ENCODE measurements at regions of chr12 and their contacts with region 1.

Region 1: DNA sequence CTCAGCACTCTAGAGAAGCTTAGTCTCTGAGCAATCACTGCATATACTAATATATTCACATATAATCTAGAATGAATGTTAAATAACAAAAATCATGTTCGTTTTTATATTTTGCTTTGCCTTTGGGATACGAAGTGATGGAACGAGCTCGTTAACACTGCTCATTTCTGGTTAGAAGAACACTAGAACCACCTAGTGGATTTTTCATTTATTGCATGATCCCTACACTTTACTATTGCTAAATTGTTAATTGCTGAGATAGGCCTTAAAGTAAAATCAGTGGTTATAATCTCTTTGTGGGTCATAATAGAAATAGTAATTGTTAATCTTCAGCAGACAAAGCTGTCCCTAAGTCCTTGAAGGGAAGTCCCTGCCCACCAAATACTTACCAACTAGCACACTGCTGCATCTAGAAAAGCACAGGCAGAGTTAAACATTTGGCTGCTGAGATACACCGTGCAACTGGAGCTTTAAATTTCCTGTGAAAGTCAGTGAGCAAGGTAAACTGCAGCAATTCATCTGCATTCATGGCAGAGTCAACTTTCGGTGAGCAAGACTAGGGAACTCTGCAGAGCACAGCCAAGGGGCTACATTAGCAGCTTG is 353.7 kb downstream of the APAF1 start:
- DNase-seq: peak; percentile 25
- ATAC-seq: peak; percentile 92
- H3K4me3 ChIP-seq: no peak overlapping the region
- H3K27ac ChIP-seq: no peak overlapping the region
- H3K4me1 ChIP-seq: no peaks in the 10 kb centered on the region; the same call in 1 of the 2 replicates
- H3K27me3 ChIP-seq: no peaks in the 10 kb centered on the region
- CTCF ChIP-seq: peak; percentile 76

Region 2: DNA sequence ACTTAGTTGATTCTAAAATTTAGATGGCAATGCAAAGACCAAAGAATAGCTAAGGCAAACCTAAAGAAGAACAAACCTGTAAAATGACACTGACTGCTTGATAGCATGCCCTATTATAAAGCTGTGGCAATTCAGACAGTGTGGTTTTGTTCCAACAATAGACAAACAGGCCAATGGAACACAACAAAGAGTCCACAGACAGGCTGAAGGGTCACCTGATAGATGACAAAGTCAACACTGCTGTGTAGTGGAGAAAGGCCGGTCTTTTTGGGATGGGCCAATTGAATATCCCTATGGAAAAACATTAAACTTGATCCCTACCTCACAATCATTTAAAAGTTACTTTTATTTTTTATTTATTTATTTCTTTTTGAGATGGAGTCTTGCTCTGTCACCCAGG is 439.1 kb before region 1 on chr12:
- CTCF ChIA-PET with region 1: no interaction called
- POLR2A ChIA-PET with region 1: no interaction called
- in situ Hi-C with region 1: no loop called
- intact Hi-C with region 1: loop called (anchors 10 kb)
- DNase-seq: no peak
- ATAC-seq: no peak
- H3K4me3 ChIP-seq: no peak overlapping the region
- H3K27ac ChIP-seq: no peak overlapping the region
- H3K4me1 ChIP-seq: no peaks in the 10 kb centered on the region
- H3K27me3 ChIP-seq: no peaks in the 10 kb centered on the region
- CTCF ChIP-seq: no peak

Region 3: DNA sequence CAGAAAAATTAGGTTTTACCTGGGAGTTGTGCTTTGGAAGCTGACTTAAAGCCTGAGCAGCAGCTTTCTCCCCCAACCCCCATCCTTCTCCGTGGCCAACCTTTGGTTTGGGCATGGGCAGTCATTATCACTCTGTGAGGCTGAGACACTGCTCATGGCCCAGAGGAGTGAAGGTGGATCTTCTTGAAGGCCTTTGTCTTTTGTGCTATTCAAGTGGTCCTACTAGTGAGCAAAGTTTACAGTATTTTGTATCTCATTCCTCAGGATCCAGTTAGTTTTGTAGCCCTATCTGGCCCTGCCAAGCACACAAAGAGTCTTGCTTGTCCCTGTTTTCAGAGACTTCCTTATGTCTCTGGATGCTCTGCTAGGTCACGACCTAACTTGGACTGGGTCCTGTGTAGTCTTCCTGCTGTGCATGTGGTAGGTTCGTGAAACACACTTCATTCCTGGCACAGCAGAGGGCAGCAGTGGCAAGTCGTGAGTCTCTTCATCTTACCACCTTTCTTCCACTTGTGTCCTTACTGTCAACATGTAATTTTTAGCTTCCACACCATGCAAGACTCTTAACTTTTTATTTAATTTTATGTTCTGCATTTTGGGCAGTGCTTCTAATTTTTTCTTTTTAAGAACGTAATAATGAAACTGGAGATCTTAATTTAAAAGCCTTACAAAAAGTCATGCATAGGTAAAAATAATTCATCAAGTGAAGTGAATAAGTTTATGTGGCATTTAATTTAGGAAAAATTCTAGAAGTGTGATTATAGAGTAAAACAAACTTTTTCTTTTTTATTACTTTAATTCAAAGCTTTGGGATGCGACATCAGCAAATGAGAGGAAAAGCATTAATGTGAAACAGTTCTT is 300.0 kb before region 1 on chr12:
- CTCF ChIA-PET with region 1: no interaction called
- POLR2A ChIA-PET with region 1: no interaction called
- in situ Hi-C with region 1: no loop called
- intact Hi-C with region 1: loop called (anchors 1 kb)
- DNase-seq: peak; percentile 38
- ATAC-seq: peak; percentile 97
- H3K4me3 ChIP-seq: no peak overlapping the region
- H3K27ac ChIP-seq: no peak overlapping the region
- H3K4me1 ChIP-seq: 0 out of 2 replicates have a peak, but pooled peaks cover 3% of the 10 kb centered on the region
- H3K27me3 ChIP-seq: no peaks in the 10 kb centered on the region
- CTCF ChIP-seq: peak; percentile 85

Region 4: DNA sequence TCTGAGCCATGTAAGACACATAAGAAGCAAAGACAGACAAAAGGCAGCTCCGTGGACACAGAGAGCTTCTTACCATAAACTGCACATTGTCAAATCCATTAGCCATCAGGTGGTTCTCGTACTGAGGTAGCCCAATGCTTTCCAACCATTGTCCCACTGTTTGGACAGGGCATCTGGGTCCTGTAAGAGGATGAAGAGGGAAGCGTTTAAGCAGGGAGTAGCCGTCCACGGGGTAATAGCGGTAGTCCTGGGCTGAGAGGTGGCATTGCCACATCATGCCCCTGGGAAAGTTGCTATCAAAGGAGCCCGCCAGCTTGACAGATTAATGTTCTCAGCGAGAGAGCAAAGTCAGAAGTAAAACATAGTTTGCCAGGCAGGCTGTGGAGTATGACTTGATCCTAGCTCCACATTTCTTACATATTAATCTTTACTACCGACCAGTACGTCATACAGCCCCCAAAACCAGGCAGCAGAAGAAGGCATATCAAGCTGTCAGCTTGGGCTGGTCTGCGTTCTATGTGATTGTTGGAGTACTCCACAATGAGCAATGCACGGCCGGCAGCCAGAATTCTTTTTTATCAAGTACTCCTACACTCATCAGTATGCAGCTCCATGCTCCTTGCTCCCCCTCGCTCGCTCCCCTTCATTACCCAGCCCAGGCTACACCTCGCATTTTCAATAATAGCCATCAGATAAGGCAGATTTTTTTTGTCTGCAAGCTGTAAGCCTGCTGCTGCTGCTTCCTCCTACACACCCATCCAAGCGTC is 155.6 kb after region 1 on chr12:
- CTCF ChIA-PET with region 1: no interaction called
- POLR2A ChIA-PET with region 1: no interaction called
- in situ Hi-C with region 1: no loop called
- intact Hi-C with region 1: no loop called
- DNase-seq: no peak
- ATAC-seq: no peak
- H3K4me3 ChIP-seq: no peak overlapping the region
- H3K27ac ChIP-seq: no peak overlapping the region
- H3K4me1 ChIP-seq: no peaks in the 10 kb centered on the region
- H3K27me3 ChIP-seq: no peaks in the 10 kb centered on the region
- CTCF ChIP-seq: no peak